Transverse colon (tissue), 4 donors: ENCODE measurements at regions of chr17 and their contacts with region 1.

Region 1: DNA sequence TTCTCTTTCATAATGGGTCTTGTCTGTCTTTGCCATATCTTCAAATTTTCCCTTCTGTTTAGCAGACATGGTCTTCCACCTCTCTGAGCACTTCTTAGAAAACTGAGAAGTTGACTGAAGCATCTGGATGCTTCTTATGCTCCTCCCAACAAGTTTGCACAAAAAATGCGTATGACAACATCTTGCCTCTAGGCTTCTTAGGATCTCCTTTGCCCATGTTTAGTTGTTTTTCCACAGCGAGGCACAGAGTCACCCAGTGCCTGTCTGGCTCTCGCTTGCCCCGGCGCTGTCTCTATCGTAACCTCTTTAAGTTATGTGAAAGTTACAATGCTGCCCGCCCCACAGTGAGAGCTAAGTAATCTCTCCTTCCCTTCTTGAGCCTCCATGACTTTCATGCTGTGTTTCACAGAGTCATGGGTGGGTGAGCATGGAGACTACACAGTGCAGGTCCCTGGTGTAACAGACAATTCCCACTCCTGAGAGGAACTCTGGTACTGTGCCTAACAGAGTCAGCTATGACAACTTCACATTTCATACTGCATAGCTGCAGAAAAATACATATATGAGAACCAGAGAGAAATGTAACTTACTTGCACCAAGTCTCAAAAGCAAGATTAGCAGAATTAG is 195.4 kb downstream of the AATF start:
- DNase-seq: no peak
- H3K4me3 ChIP-seq: no peak overlapping the region
- H3K27ac ChIP-seq: no peak overlapping the region
- H3K4me1 ChIP-seq: peaks cover 0 to 16% (median 2%) of the 10 kb centered on the region in 4 donors
- H3K27me3 ChIP-seq: no peaks in the 10 kb centered on the region
- CTCF ChIP-seq: no peak
- EP300 ChIP-seq: no peak
- POLR2A ChIP-seq: no peak

Region 2: DNA sequence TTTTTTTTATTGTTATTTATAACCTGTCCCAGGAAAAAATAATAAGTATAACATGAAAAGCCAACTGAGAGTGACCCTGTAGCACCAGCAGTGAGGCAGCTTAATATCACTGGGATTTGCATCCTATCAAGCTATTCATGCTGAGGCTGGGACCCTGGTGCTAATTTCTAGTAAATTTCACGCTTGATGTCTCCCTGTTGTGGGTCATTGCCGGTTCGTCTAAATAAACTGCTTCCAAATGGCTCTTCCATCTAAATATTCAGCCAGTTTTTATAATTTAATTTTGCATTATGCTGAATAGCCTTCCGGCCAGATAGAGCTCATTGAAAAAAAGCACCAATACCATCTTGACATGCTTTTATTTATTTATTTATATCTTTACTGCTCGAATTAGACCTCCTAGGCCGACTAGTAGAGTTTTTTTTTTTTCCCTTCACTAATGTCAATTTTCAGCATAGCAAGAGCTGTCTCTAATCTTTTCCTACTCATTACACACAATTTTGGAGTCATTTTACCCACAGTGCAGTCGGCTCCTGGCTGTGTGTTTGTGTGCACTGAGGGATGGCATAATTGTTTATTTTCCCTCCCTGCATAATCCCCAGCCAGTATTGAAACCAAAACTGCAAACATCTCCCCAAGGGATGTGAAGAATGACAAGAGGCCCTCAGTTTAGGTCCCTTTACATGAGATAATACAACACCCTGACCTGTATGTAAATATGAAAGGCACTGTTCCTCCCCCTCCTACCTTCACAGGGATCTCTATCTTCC is 26.6 kb before region 1 on chr17:
- in situ Hi-C with region 1: no loop called
- intact Hi-C with region 1: loop called (anchors 2 kb)
- DNase-seq: no peak
- H3K4me3 ChIP-seq: no peak overlapping the region
- H3K27ac ChIP-seq: no peak overlapping the region
- H3K4me1 ChIP-seq: no peaks in the 10 kb centered on the region
- H3K27me3 ChIP-seq: no peaks in the 10 kb centered on the region
- CTCF ChIP-seq: no peak
- EP300 ChIP-seq: no peak
- POLR2A ChIP-seq: no peak